ENCODE measurements at regions of chr5 and their contacts with region 1.

Region 1: GRCh38 chr5:151080623-151081430 is at the start of gene TNIP1:
- DNase-seq: peak; percentile 78 to 98
- H3K4me3 ChIP-seq: peak within 1 kb of the TSS; percentile 75
- H3K27ac ChIP-seq: peak within 1 kb of the TSS; percentile 81
- H3K4me1 ChIP-seq: peaks cover 80% of the 10 kb centered on the region
- H3K27me3 ChIP-seq: no peaks in the 10 kb centered on the region
- CTCF ChIP-seq: no peak
- total RNA-seq, gene TNIP1: 122 and 124 TPM in 2 replicates

Region 2: GRCh38 chr5:150862070-150862469 is 218.8 kb before region 1 on chr5:
- CTCF ChIA-PET with region 1: no interaction called
- POLR2A ChIA-PET with region 1: no interaction called
- intact Hi-C with region 1: no loop called
- DNase-seq: no peak
- H3K4me3 ChIP-seq: no peak overlapping the region
- H3K27ac ChIP-seq: no peak overlapping the region
- H3K4me1 ChIP-seq: no peaks in the 10 kb centered on the region
- H3K27me3 ChIP-seq: no peaks in the 10 kb centered on the region; the same call in 1 of the 2 replicates
- CTCF ChIP-seq: no peak

Region 3: DNA sequence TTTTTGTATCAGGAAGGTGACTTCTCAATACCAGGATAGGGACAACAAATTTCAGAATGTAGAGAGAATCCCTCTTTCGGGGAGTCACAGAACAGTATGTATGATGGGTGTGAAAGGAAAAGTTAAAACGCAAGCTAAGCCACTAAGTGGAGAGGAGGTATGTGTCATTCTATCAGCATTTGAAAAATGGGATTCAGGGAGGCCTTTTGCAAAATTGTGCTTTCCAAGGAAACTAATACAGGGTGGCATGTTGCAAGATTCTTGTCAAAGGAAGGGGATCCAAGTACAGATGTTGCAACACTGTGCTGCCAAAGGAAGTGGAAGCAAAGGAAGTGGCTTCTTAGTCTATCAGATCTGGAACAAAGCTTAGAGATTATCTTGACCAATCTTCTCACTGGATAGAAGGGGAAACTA is 12.7 kb after region 1 on chr5:
- CTCF ChIA-PET with region 1: no interaction called
- POLR2A ChIA-PET with region 1: interaction called, 4 read pairs
- intact Hi-C with region 1: loop called (anchors 1 kb)
- DNase-seq: peak; percentile 46 to 98
- H3K4me3 ChIP-seq: peak overlapping the region; percentile 35; the same call in 1 of the 2 replicates
- H3K27ac ChIP-seq: peak overlapping the region; percentile 94
- H3K4me1 ChIP-seq: peaks cover 50% of the 10 kb centered on the region
- H3K27me3 ChIP-seq: no peaks in the 10 kb centered on the region
- CTCF ChIP-seq: no peak